Ovary (tissue), 10 donors: ENCODE measurements at regions of chr6 and their contacts with region 1.

Region 1: DNA sequence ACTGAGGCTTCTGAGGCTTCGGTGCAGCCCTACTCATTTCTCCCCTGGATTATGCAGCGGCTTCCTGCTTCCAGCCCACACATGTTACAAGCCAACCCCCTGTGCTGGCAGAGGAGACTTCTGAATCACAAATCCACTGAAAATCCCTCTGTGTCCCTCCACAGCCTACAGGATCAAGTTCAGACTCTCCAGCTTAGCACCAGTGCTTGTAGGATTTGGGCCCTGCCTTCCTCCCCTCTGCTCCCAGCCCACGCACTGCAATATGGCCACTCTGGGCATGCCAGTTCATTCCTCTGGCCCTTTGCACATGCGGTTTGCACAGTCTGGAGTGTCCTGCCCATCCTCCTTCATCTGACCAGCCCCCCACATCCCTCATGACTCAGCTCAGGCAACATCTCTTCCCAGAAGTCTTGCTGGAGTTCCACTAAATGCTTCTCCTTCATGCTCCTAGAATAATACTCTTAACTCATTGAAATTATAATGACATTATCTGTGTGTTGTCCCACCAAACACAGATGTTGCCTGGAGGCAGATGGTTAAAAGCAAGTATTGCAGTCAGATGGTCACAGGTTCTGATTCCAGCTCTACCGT is 15.9 kb upstream of the MDGA1 start:
- DNase-seq: no peak
- H3K4me3 ChIP-seq: no peak overlapping the region
- H3K27ac ChIP-seq: no peak overlapping the region
- H3K4me1 ChIP-seq: no peaks in the 10 kb centered on the region
- H3K27me3 ChIP-seq: no peaks in the 10 kb centered on the region
- CTCF ChIP-seq: no peak
- EP300 ChIP-seq: no peak
- POLR2A ChIP-seq: no peak

Region 2: DNA sequence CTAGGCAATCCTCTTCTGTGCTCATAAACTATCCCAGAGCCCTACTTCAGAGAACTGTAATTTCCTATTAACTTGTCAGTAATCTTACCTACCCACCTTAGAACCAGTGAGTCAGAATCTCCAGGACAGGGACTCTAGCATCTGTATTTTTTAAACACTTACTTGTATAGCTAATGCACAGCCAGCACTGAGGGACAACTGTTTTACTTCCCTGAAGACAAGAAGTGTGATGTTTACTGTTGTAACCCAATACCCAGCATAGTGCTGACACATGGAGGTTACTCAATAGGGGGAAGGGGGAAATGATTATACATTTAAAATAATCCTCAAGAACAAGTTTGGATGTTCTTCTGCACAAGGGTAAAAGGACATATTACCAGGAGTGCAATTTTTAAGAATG is 795.3 kb after region 1 on chr6:
- intact Hi-C with region 1: loop called in 1 of 4 experiments (anchors 10 kb)
- DNase-seq: no peak
- H3K4me3 ChIP-seq: no peak overlapping the region
- H3K27ac ChIP-seq: no peak overlapping the region
- H3K4me1 ChIP-seq: peaks cover 6% of the 10 kb centered on the region
- H3K27me3 ChIP-seq: no peaks in the 10 kb centered on the region
- CTCF ChIP-seq: no peak
- EP300 ChIP-seq: no peak
- POLR2A ChIP-seq: no peak

Region 3: DNA sequence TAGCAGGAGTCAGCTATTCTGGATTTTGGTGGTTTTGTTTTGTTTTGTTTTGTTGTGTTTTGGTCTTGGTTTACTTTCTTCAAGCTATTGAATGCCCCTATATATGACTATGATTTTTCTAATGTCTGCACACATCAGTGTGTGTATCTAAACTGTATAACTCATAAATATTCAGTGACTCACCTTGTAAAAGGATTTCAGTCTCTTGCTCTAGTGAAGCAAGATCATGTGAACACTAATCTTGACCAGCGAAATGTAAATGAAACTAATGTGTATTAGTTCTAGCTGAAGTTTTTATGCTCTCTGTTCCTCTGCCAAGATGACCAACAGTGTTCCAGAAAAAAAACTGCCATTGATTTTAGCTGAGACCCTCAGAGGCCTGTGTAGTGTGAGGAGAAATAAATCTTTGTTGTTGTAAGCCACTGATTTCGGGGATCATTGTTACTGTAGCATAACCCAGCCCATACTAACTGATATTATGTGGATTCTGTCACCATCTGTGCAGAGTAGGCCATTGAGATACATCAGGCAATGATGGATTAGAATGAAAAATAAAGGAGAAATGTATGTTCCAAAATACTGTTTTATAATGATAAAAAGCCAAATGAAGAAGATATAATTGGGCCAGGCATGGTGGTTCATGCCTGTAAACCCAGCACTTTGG is 937.6 kb after region 1 on chr6:
- intact Hi-C with region 1: no loop called
- DNase-seq: no peak
- H3K4me3 ChIP-seq: no peak overlapping the region
- H3K27ac ChIP-seq: no peak overlapping the region
- H3K4me1 ChIP-seq: peaks cover 3% of the 10 kb centered on the region
- H3K27me3 ChIP-seq: no peaks in the 10 kb centered on the region
- CTCF ChIP-seq: no peak
- EP300 ChIP-seq: no peak
- POLR2A ChIP-seq: no peak